MCF 10A (cell line): ENCODE measurements at regions of chr5 and their contacts with region 1.

Region 1: GRCh38 chr5:88690409-88691229 is 192.4 kb downstream of the MEF2C start:
- DNase-seq: peak; percentile 61
- H3K4me3 Mint-ChIP-seq: peak overlapping the region; percentile 10
- H3K27ac Mint-ChIP-seq: no peak overlapping the region
- H3K4me1 Mint-ChIP-seq: peaks cover 7% of the 10 kb centered on the region
- H3K27me3 Mint-ChIP-seq: peaks cover 100% of the 10 kb centered on the region
- CTCF ChIP-seq: peak; percentile 98

Region 2: GRCh38 chr5:87774804-87775203 is 915.8 kb before region 1 on chr5:
- CTCF ChIA-PET with region 1: interaction called, 107 read pairs
- POLR2A ChIA-PET with region 1: no interaction called
- intact Hi-C with region 1: no loop called
- DNase-seq: no peak
- H3K4me3 Mint-ChIP-seq: no peak overlapping the region
- H3K27ac Mint-ChIP-seq: no peak overlapping the region
- H3K4me1 Mint-ChIP-seq: no peaks in the 10 kb centered on the region
- H3K27me3 Mint-ChIP-seq: peaks cover 49% of the 10 kb centered on the region
- CTCF ChIP-seq: no peak

Region 3: DNA sequence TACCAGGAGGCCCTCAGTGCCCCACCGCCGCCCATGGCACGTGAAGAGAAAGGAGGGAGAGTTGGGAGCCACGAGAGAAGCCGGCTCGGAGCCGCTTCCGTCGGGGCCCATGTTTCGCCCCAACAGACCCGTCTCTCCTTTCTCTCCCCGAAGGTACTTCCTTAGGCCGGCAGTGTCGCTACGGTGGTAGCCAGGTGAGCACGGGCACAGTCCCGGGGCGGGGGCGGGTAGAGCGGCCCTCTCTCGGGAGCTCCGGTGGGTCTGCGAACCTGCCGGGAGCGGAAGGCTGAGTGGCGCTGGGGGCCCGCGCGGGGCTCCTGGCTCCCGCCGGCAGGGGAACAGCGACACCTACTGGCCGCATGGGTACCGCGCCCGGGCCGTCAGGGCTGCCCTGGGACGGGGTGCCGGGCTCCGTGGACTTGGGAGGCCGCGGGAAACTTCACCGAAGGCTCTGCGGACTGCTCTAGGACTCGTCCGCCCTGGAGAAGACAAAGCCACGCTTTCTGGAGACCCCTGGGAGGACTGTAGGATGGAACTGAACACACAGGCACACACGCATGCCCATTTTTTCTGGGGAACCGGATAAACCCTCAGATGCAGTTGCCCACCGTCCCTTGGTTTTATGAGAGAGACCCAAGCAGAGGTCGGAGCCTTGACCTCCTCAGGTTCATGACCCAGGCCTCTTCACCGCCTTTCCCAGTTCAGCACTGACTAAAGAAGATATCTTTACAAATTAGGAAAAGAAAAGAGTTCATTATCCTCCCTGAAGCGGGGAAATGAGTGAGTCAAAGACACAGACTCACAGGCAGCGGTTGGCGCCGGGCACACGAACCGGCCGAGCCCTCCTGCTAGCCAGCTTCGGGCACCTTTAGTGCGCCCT is 10.1 kb before region 1 on chr5:
- CTCF ChIA-PET with region 1: interaction called, 27 read pairs
- POLR2A ChIA-PET with region 1: no interaction called
- intact Hi-C with region 1: no loop called
- DNase-seq: peak; percentile 51
- H3K4me3 Mint-ChIP-seq: peak overlapping the region; percentile 45
- H3K27ac Mint-ChIP-seq: no peak overlapping the region
- H3K4me1 Mint-ChIP-seq: no peaks in the 10 kb centered on the region
- H3K27me3 Mint-ChIP-seq: peaks cover 77% of the 10 kb centered on the region
- CTCF ChIP-seq: peak; percentile 95

Region 4: DNA sequence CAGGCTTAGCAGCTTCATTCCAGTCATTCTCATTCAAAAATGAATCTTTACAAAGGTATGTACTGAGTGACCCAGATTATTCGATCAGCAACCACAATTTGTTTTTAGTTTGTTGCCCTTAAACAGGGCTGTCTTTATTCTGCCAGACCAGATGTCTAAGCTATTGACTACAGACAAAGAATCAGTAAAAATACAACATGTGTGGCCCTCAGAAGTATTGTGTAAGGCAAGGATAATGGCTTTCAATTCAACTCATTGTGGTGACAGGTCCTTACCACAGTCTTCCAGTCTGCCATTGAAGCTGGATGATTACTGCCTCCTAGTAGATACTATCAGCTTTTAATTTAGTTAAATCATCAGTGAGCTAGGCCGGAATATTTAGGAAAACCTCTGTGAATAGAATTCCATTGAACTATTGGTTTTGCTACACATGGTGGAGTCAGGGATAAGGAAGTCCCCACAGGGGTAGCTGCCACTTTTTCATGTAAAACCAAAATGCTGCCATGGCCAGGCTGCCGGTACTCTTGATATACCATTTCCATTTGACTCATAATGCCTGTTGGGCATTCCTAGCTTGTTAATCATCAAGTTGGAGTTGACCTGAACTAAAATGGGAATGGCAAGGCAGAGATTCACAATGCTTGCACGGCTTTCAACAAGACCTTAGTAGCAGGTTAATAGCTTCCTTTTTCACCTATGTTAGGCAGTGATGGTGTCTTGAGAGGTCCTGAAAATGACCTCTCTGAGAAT is 16.8 kb after region 1 on chr5:
- CTCF ChIA-PET with region 1: interaction called, 14 read pairs
- POLR2A ChIA-PET with region 1: no interaction called
- intact Hi-C with region 1: no loop called
- DNase-seq: no peak
- H3K4me3 Mint-ChIP-seq: no peak overlapping the region
- H3K27ac Mint-ChIP-seq: no peak overlapping the region
- H3K4me1 Mint-ChIP-seq: no peaks in the 10 kb centered on the region
- H3K27me3 Mint-ChIP-seq: peaks cover 21% of the 10 kb centered on the region
- CTCF ChIP-seq: no peak